ENCODE measurements at regions of chr1 and their contacts with region 1.

Region 1: DNA sequence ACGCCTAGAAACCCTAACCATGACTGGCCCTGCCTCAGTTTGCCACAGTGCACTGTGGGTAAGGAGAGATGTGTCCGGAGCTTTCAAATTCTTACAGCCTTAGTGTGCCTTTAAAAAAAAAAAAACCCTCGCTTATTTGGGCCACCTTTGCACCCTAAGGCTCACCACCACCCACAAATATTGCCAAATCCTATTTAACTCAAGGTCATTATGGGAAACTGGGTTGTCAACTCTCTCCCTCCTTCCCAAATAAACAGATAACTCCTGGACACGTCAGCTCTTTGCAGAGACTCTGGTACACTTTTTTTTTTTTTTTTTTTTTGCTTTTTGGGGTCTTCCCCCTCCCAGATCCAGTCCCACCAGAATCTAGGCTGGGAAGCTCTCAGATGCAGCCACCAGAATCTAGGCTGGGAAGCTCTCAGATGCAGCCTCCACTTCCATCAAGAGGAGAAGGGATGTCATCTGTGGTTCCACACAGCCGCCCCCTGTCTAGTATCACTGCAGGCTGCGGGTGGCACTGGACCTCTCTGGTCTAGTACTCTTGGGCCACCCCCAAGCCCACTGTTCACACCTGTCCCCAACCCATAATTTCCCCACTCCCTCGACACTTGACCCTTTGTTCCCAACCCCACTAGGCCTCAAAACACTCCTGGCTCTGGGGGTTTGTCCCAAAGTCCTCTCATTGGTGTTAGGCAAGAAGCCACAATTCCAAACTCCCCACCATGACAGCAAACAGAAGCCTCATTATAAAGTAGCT is 3.4 kb downstream of the DHRS3 start:
- DNase-seq: no peak
- ATAC-seq: no peak
- H3K4me3 Mint-ChIP-seq: peak overlapping the region; percentile 95
- H3K27ac Mint-ChIP-seq: no peak overlapping the region
- H3K4me1 Mint-ChIP-seq: peaks cover 53% of the 10 kb centered on the region
- H3K27me3 Mint-ChIP-seq: no peaks in the 10 kb centered on the region

Region 2: GRCh38 chr1:12344596-12345349 is 269.8 kb before region 1 on chr1:
- CTCF ChIA-PET with region 1: no interaction called
- POLR2A ChIA-PET with region 1: interaction called, 13 read pairs
- intact Hi-C with region 1: loop called in 1 of 2 experiments (anchors 1 kb)
- DNase-seq: peak; percentile 58
- ATAC-seq: peak; percentile 68
- H3K4me3 Mint-ChIP-seq: peak overlapping the region; percentile 63
- H3K27ac Mint-ChIP-seq: peak overlapping the region; percentile 93
- H3K4me1 Mint-ChIP-seq: peaks cover 61% of the 10 kb centered on the region
- H3K27me3 Mint-ChIP-seq: no peaks in the 10 kb centered on the region